RWPE1 (cell line): ENCODE measurements at regions of chr9 and their contacts with region 1.

Region 1: GRCh38 chr9:92140074-92140753 is 25.0 kb upstream of the SPTLC1 start:
- DNase-seq: peak; percentile 73
- H3K27ac ChIP-seq: peak overlapping the region; percentile 25; the same call in 1 of the 2 replicates
- CTCF ChIP-seq: peak; percentile 99

Region 2: DNA sequence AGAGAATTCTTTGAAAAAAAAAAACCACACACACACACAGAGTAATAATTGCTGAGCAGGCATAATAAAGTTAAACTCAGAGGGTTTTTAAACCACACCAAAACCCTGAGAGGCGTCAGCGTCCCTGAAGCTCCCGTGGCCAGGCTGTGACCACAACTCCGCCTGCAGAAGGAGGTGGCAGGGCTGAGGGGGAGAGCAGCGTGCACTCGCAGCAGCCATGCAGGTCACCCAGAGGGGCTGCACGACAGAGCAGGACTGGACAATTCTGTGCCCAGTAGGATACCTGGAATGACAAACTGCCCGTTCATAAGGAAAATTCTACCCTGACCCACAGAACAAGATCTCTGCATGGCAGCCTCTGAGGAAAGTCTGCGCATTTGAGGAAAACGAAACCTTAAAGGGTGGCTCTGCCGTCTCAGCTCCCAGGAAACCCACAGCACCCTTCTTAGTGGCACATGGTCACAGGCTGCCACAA is 234.2 kb before region 1 on chr9:
- CTCF ChIA-PET with region 1: no interaction called
- POLR2A ChIA-PET with region 1: no interaction called
- DNase-seq: peak; percentile 19
- H3K27ac ChIP-seq: no peak overlapping the region
- CTCF ChIP-seq: no peak

Region 3: GRCh38 chr9:92119586-92119985 is 20.6 kb before region 1 on chr9:
- CTCF ChIA-PET with region 1: interaction called, 13 read pairs
- POLR2A ChIA-PET with region 1: no interaction called
- DNase-seq: no peak
- H3K27ac ChIP-seq: no peak overlapping the region
- CTCF ChIP-seq: no peak

Region 4: GRCh38 chr9:92206488-92206887 is 66.3 kb after region 1 on chr9:
- CTCF ChIA-PET with region 1: interaction called, 28 read pairs
- POLR2A ChIA-PET with region 1: no interaction called
- DNase-seq: no peak
- H3K27ac ChIP-seq: no peak overlapping the region
- CTCF ChIP-seq: no peak

Region 5: DNA sequence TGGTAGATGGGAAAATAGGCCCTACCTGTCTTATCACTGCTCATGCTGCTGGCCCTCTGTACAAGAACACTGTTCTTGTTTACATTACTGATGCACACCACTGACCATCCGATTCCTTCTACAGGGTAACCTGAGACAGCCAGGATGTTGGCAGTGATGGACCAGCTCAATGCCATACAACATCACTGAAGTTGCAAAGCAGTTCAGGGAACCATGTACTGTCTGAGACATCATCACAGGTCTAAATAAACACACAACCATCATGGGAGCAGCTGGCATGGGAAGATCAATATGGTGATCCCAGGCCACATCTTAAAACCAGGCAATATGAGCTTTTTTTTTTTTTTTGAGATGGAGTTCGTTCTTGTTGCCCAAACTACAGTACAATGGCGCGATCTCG is 94.3 kb after region 1 on chr9:
- CTCF ChIA-PET with region 1: interaction called, 27 read pairs
- POLR2A ChIA-PET with region 1: no interaction called
- DNase-seq: no peak
- H3K27ac ChIP-seq: no peak overlapping the region
- CTCF ChIP-seq: no peak

Region 6: DNA sequence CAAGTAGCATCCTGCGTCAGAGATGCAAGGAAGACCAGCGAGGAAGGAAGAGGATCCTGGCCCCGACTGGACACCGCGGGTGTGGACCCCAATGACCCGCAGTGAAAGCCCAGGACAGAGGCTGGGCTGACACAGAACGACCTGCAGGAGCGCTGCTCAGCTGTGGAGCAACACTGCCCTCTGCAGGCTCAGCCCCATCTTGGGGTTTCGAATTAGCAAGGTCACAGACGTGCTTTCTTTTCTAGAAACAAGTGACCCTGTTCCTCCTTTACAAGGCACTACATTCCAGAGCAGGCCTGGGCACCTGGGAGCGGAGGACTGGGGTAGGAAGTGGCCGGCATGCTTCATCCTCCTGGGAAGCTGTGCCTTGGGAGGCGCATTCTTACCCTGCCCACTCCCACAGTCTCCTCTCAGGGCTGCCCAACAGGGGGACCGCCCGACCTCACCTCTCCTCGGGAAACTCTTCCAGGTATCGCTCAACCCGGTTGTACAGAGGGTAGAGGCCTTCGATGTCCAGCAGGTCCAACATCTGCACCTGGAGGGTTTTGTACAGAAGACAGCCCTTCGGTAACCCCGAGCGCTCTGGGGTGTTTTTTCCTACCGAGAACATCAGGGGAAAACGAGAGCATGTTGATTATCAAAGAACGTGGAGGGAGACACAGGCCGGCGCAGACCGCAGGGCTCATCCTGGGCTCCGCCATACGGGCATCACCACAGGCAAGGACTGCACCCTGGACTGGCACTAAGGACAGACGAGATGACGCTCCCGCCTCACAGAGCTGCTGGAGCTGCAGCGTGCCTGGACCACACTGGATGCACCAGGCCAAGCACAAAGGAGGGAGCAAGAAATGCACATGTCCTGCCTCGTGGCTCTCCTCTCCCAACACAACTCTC is 494.7 kb after region 1 on chr9:
- CTCF ChIA-PET with region 1: interaction called, 14 read pairs
- POLR2A ChIA-PET with region 1: no interaction called
- DNase-seq: peak; percentile 87
- H3K27ac ChIP-seq: peak overlapping the region; percentile 40
- CTCF ChIP-seq: peak; percentile 97